Prostate gland (tissue), 2 donors: ENCODE measurements at regions of chr7 and their contacts with region 1.

Region 1: GRCh38 chr7:30478349-30479201 is at the start of gene NOD1:
- DNase-seq: peak; percentile 58
- H3K4me3 ChIP-seq: peak within 1 kb of the TSS; percentile 55 to 58
- H3K27ac ChIP-seq: peak within 1 kb of the TSS; percentile 81 to 89
- H3K4me1 ChIP-seq: no peaks in the 10 kb centered on the region
- H3K27me3 ChIP-seq: no peaks in the 10 kb centered on the region
- CTCF ChIP-seq: peak in 1 of 4 experiments; percentile 26
- POLR2A ChIP-seq: peak; percentile 8
- total RNA-seq, gene NOD1: 3.5 to 12.3 TPM

Region 2: DNA sequence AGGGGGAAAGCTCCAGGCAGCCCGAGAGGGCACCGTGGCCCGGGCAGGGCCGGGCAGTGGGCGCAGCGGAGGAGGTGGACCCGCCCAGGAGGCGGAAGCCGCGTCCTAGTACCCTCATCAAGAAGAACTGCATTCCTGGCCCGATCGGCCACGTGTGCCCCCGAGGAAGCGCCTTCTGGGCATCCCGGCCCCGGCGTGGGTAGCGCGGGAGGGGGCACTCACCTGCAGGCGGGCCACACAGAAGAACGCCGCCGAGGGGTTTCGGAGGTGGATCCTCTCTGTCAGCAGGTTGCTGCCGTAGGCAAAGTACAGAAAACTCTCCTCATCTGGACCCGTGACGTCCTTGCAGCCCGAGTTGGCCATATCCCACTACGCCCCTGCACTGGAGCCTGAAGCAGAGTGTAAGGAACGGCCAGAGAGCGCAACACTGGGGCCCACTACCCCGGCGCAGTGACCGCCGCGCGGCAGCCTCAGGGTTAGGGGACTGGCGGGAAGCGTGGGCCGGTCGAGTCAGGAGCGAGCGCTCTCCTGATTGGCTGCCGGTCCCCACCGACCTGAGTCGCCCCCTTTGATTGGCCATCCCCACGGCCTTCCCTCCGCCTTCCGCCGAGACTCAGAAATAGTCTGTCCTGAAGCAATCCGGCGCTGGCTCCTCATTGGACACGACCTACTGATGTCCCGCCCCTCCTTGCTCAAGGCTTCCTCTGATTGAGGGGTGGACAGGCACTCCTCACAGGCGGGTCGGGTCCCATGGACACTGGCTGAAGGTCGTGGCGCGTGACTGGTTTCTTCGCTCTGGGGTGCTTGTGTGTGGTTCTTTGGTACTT is 26.0 kb after region 1 on chr7 and contains the start of gene GGCT:
- intact Hi-C with region 1: loop called (anchors 1 kb)
- DNase-seq: peak; percentile 100
- H3K4me3 ChIP-seq: peak within 1 kb of the TSS; percentile 73 to 85
- H3K27ac ChIP-seq: peak within 1 kb of the TSS; percentile 85
- H3K4me1 ChIP-seq: peaks cover 3% of the 10 kb centered on the region
- H3K27me3 ChIP-seq: no peaks in the 10 kb centered on the region
- CTCF ChIP-seq: no peak
- POLR2A ChIP-seq: peak; percentile 66
- total RNA-seq, gene GGCT: 14.7 to 54.0 TPM